Activated T-helper 2 cell treated with anti-CD3 and anti-CD28 coated beads, Interferon-gamma antibody, Interleukin-2, Interleukin-4, amounts not matched to agents 10 μg/mL and 5 μg/mL and 100 μg/mL, durations not matched to agents 14 hours and 24 hours and 36 hours (primary cell): ENCODE measurements at regions of chr10 and their contacts with region 1.

Region 1: GRCh38 chr10:84264611-84265141 is 19.8 kb downstream of the RGR start:
- DNase-seq: peak; percentile 47
- H3K4me3 Mint-ChIP-seq: no peak overlapping the region
- H3K27ac Mint-ChIP-seq: no peak overlapping the region
- H3K4me1 Mint-ChIP-seq: peaks cover 17% of the 10 kb centered on the region
- H3K27me3 Mint-ChIP-seq: peaks cover 32% of the 10 kb centered on the region

Region 2: GRCh38 chr10:84328418-84329195 is 63.9 kb after region 1 on chr10 and contains the start of gene CCSER2:
- intact Hi-C with region 1: loop called (anchors 2 kb)
- DNase-seq: peak; percentile 88
- H3K4me3 Mint-ChIP-seq: peak within 1 kb of the TSS; percentile 95
- H3K27ac Mint-ChIP-seq: peak within 1 kb of the TSS; percentile 95
- H3K4me1 Mint-ChIP-seq: peaks cover 32% of the 10 kb centered on the region
- H3K27me3 Mint-ChIP-seq: peaks cover 5% of the 10 kb centered on the region
- total RNA-seq, gene CCSER2: 36.4 and 41.4 TPM in 2 replicates

Region 3: GRCh38 chr10:84375011-84375410 is 110.3 kb after region 1 on chr10:
- intact Hi-C with region 1: loop called (anchors 1 kb)
- DNase-seq: no peak
- H3K4me3 Mint-ChIP-seq: no peak overlapping the region
- H3K27ac Mint-ChIP-seq: no peak overlapping the region
- H3K4me1 Mint-ChIP-seq: peaks cover 24% of the 10 kb centered on the region
- H3K27me3 Mint-ChIP-seq: no peaks in the 10 kb centered on the region

Region 4: GRCh38 chr10:84537447-84537931 is 272.8 kb after region 1 on chr10:
- intact Hi-C with region 1: loop called (anchors 1 kb)
- DNase-seq: no peak
- H3K4me3 Mint-ChIP-seq: no peak overlapping the region
- H3K27ac Mint-ChIP-seq: no peak overlapping the region
- H3K4me1 Mint-ChIP-seq: peaks cover 19% of the 10 kb centered on the region
- H3K27me3 Mint-ChIP-seq: peaks cover 15% of the 10 kb centered on the region